ENCODE measurements at regions of chr7 and their contacts with region 1.

Region 1: GRCh38 chr7:78499971-78500370 is 701.4 kb downstream of the PHTF2 start:
- DNase-seq: no peak
- ATAC-seq: no peak
- H3K4me3 ChIP-seq: no peak overlapping the region
- H3K27ac ChIP-seq: no peak overlapping the region
- H3K4me1 ChIP-seq: no peaks in the 10 kb centered on the region
- H3K27me3 ChIP-seq: no peaks in the 10 kb centered on the region
- CTCF ChIP-seq: no peak

Region 2: GRCh38 chr7:79636849-79637248 is 1136.9 kb after region 1 on chr7:
- intact Hi-C with region 1: loop called in 1 of 10 experiments (anchors 10 kb)
- DNase-seq: no peak
- ATAC-seq: no peak
- H3K4me3 ChIP-seq: no peak overlapping the region
- H3K27ac ChIP-seq: no peak overlapping the region
- H3K4me1 ChIP-seq: no peaks in the 10 kb centered on the region
- H3K27me3 ChIP-seq: no peaks in the 10 kb centered on the region
- CTCF ChIP-seq: no peak